Mammary epithelial cell (primary cell): ENCODE measurements at regions of chr4 and their contacts with region 1.

Region 1: DNA sequence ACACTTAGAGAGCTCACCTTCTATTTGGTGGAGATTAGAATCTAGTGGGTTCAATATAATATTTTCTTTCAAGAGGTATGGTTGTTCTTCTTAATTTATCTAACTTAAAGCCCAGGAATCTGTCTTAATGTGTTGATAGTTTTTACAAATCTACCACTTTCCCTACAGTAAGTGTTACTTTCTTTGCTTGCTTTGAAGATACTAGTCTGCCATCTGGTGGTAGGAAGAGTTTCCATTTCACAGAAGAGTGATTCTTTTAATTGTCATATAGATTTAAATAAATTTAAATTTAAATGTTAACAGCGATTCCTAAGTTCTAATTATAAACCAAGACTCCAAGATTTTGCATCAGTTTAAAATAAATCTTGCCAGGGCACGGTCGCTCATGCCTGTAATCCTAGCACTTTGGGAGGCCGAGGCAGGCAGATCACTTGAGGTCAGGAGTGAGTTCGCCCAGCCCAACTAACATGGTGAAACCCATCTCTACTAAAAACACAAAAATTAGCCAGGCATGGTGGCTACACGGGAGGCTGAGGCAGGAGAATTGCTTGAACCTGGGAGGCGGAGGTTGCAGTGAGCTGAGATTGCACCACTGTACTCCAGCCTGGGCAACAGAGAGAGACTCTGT is 43.5 kb downstream of the NUDT9 start:
- DNase-seq: peak; percentile 17
- H3K4me3 ChIP-seq: no peak overlapping the region
- H3K27ac ChIP-seq: no peak overlapping the region
- H3K4me1 ChIP-seq: no peaks in the 10 kb centered on the region
- H3K27me3 ChIP-seq: no peaks in the 10 kb centered on the region
- CTCF ChIP-seq: peak; percentile 45 to 63

Region 2: GRCh38 chr4:85607624-85608023 is 1858.2 kb before region 1 on chr4:
- CTCF ChIA-PET with region 1: no interaction called
- dilution Hi-C with region 1: no loop called
- in situ Hi-C with region 1: no loop called
- intact Hi-C with region 1: no loop called
- DNase-seq: no peak
- H3K4me3 ChIP-seq: no peak overlapping the region
- H3K27ac ChIP-seq: no peak overlapping the region
- H3K4me1 ChIP-seq: no peaks in the 10 kb centered on the region
- H3K27me3 ChIP-seq: no peaks in the 10 kb centered on the region
- CTCF ChIP-seq: no peak

Region 3: GRCh38 chr4:87270144-87270543 is 195.7 kb before region 1 on chr4:
- CTCF ChIA-PET with region 1: no interaction called
- dilution Hi-C with region 1: no loop called
- in situ Hi-C with region 1: loop called in 1 of 2 experiments (anchors 25 kb)
- intact Hi-C with region 1: loop called (anchors 1 kb)
- DNase-seq: peak; percentile 26
- H3K4me3 ChIP-seq: no peak overlapping the region
- H3K27ac ChIP-seq: no peak overlapping the region
- H3K4me1 ChIP-seq: no peaks in the 10 kb centered on the region
- H3K27me3 ChIP-seq: peaks cover 6% of the 10 kb centered on the region
- CTCF ChIP-seq: peak; percentile 65 to 73

Region 4: DNA sequence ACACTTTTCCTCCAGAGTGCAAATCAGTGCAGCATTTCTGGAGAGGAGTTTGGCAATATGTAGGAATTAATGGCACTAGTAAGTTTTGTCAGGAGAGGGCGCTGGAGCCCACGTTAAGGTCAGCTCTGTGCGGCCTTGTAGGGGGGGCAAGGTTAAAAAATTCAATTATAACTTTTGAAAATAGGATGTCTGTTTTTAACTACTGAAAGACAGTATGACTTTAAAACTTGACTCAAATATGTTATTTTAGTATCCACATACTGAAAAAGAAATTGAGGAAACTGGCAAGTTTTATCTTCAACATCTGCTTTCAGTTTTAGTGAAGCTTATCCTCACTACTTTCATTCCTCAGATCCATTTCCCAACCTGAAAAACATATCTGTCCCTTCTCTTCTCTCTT is 112.3 kb before region 1 on chr4:
- CTCF ChIA-PET with region 1: interaction called, 4 read pairs
- dilution Hi-C with region 1: no loop called
- in situ Hi-C with region 1: no loop called
- intact Hi-C with region 1: loop called (anchors 5 kb)
- DNase-seq: peak; percentile 29
- H3K4me3 ChIP-seq: no peak overlapping the region
- H3K27ac ChIP-seq: no peak overlapping the region
- H3K4me1 ChIP-seq: peaks cover 7% of the 10 kb centered on the region
- H3K27me3 ChIP-seq: no peaks in the 10 kb centered on the region
- CTCF ChIP-seq: peak; percentile 56 to 76

Region 5: DNA sequence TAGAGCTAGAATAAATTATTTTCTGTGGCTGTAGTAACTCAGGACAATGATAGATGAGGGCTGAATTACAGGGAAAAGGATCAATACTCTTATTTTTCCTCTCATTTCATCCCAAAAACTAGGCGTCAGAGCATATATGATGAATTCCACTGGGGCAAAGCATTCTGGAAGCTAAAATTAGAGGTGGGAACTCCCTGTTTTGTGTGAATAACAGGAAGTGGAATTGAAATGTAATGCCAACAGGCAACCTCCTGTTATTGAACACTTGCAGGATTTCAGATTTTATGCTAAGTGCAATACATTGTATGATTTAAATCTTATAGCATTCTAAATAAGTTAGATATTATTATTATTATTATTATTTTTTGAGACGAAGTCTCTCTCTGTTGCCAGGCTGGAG is 95.8 kb before region 1 on chr4:
- CTCF ChIA-PET with region 1: no interaction called
- dilution Hi-C with region 1: no loop called
- in situ Hi-C with region 1: loop called (anchors 5 kb)
- intact Hi-C with region 1: loop called (anchors 1 kb)
- DNase-seq: no peak
- H3K4me3 ChIP-seq: no peak overlapping the region
- H3K27ac ChIP-seq: no peak overlapping the region
- H3K4me1 ChIP-seq: no peaks in the 10 kb centered on the region
- H3K27me3 ChIP-seq: no peaks in the 10 kb centered on the region
- CTCF ChIP-seq: no peak

Region 6: GRCh38 chr4:87375719-87376291 is 90.0 kb before region 1 on chr4:
- CTCF ChIA-PET with region 1: no interaction called
- dilution Hi-C with region 1: no loop called
- in situ Hi-C with region 1: loop called (anchors 5 kb)
- intact Hi-C with region 1: loop called (anchors 1 kb)
- DNase-seq: peak; percentile 42
- H3K4me3 ChIP-seq: no peak overlapping the region
- H3K27ac ChIP-seq: no peak overlapping the region
- H3K4me1 ChIP-seq: no peaks in the 10 kb centered on the region
- H3K27me3 ChIP-seq: no peaks in the 10 kb centered on the region
- CTCF ChIP-seq: peak; percentile 75 to 80